ENCODE measurements at regions of chr14 and their contacts with region 1.

Region 1: GRCh38 chr14:96297000-96297399 is 41.0 kb downstream of the BDKRB1 start:
- DNase-seq: peak; percentile 31
- H3K4me3 ChIP-seq: no peak overlapping the region
- H3K27ac ChIP-seq: no peak overlapping the region
- H3K4me1 ChIP-seq: peaks cover 0 to 3% of the 10 kb centered on the region in 2 experiments; a peak in 2 of 4 replicates
- H3K27me3 ChIP-seq: no peaks in the 10 kb centered on the region
- CTCF ChIP-seq: peak; percentile 69
- EP300 ChIP-seq: no peak
- RAD21 ChIP-seq: peak; percentile 73

Region 2: GRCh38 chr14:96252999-96253539 is 43.9 kb before region 1 on chr14:
- CTCF ChIA-PET with region 1: no interaction called
- POLR2A ChIA-PET with region 1: no interaction called
- DNase-seq: no peak
- H3K4me3 ChIP-seq: no peak overlapping the region
- H3K27ac ChIP-seq: peak overlapping the region; percentile 62 to 97; a peak in 3 of 4 replicates
- H3K4me1 ChIP-seq: peaks cover 9 to 50% of the 10 kb centered on the region in 2 experiments
- H3K27me3 ChIP-seq: no peaks in the 10 kb centered on the region
- CTCF ChIP-seq: no peak
- EP300 ChIP-seq: peak in 1 of 2 experiments; percentile 89; a peak in 3 of 4 replicates
- RAD21 ChIP-seq: no peak

Region 3: GRCh38 chr14:96281486-96281885 is 15.5 kb before region 1 on chr14:
- CTCF ChIA-PET with region 1: interaction called, 24 read pairs
- POLR2A ChIA-PET with region 1: no interaction called
- DNase-seq: no peak
- H3K4me3 ChIP-seq: no peak overlapping the region
- H3K27ac ChIP-seq: peak overlapping the region in 1 of 2 experiments; percentile 72; a peak in 2 of 4 replicates
- H3K4me1 ChIP-seq: peaks cover 0 to 31% of the 10 kb centered on the region in 2 experiments; a peak in 2 of 4 replicates
- H3K27me3 ChIP-seq: no peaks in the 10 kb centered on the region
- CTCF ChIP-seq: peak; percentile 14
- EP300 ChIP-seq: no peak
- RAD21 ChIP-seq: peak; percentile 83

Region 4: GRCh38 chr14:96338551-96338950 is 41.6 kb after region 1 on chr14:
- CTCF ChIA-PET with region 1: no interaction called
- POLR2A ChIA-PET with region 1: no interaction called
- DNase-seq: no peak
- H3K4me3 ChIP-seq: no peak overlapping the region
- H3K27ac ChIP-seq: no peak overlapping the region
- H3K4me1 ChIP-seq: no peaks in the 10 kb centered on the region
- H3K27me3 ChIP-seq: no peaks in the 10 kb centered on the region
- CTCF ChIP-seq: no peak
- EP300 ChIP-seq: no peak
- RAD21 ChIP-seq: no peak

Region 5: GRCh38 chr14:96417254-96417653 is 120.3 kb after region 1 on chr14:
- CTCF ChIA-PET with region 1: interaction called, 68 read pairs
- POLR2A ChIA-PET with region 1: no interaction called
- DNase-seq: no peak
- H3K4me3 ChIP-seq: no peak overlapping the region
- H3K27ac ChIP-seq: no peak overlapping the region
- H3K4me1 ChIP-seq: no peaks in the 10 kb centered on the region
- H3K27me3 ChIP-seq: no peaks in the 10 kb centered on the region
- CTCF ChIP-seq: no peak
- EP300 ChIP-seq: no peak
- RAD21 ChIP-seq: no peak

Region 6: GRCh38 chr14:96424109-96424989 is 127.3 kb after region 1 on chr14:
- CTCF ChIA-PET with region 1: interaction called, 68 read pairs
- POLR2A ChIA-PET with region 1: no interaction called
- DNase-seq: peak; percentile 77
- H3K4me3 ChIP-seq: no peak overlapping the region; a peak in 1 of 4 replicates
- H3K27ac ChIP-seq: no peak overlapping the region
- H3K4me1 ChIP-seq: no peaks in the 10 kb centered on the region
- H3K27me3 ChIP-seq: no peaks in the 10 kb centered on the region
- CTCF ChIP-seq: peak; percentile 82
- EP300 ChIP-seq: no peak
- RAD21 ChIP-seq: peak; percentile 98